GM12878 (cell line): ENCODE measurements at regions of chr3 and their contacts with region 1.

Region 1: DNA sequence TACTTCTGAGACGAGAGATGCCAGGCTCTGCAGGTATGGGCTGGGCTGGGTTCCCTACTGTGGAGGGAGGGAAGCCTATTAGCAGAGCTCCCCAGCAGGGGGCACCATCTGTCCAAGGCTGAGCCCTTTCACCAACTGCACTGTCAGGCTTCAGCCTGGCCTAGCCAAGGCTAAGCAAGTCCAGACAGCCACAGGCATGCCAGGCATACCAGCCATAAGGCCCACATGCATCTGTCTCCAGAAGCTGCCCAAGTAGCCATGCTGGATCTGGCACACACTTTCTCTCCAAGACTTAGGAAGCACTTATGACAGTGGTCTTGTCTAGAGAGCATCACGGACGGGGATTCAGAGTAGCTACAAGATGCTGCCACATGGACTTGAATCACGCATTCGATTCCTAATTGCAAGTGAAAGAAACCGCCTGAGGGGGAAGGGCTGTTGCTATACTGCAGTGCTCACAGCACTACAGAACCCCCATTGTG is 28.3 kb downstream of the RUVBL1 start:
- DNase-seq: no peak
- ATAC-seq: peak; percentile 100
- H3K4me3 ChIP-seq: no peak overlapping the region
- H3K27ac ChIP-seq: no peak overlapping the region; the same call in none of the 2 replicates
- H3K4me1 ChIP-seq: no peaks in the 10 kb centered on the region
- H3K27me3 ChIP-seq: no peaks in the 10 kb centered on the region
- CTCF ChIP-seq: peak; percentile 83 to 93 (median 89)
- EP300 ChIP-seq: no peak
- POLR2A ChIP-seq: no peak
- RAD21 ChIP-seq: peak; percentile 77

Region 2: DNA sequence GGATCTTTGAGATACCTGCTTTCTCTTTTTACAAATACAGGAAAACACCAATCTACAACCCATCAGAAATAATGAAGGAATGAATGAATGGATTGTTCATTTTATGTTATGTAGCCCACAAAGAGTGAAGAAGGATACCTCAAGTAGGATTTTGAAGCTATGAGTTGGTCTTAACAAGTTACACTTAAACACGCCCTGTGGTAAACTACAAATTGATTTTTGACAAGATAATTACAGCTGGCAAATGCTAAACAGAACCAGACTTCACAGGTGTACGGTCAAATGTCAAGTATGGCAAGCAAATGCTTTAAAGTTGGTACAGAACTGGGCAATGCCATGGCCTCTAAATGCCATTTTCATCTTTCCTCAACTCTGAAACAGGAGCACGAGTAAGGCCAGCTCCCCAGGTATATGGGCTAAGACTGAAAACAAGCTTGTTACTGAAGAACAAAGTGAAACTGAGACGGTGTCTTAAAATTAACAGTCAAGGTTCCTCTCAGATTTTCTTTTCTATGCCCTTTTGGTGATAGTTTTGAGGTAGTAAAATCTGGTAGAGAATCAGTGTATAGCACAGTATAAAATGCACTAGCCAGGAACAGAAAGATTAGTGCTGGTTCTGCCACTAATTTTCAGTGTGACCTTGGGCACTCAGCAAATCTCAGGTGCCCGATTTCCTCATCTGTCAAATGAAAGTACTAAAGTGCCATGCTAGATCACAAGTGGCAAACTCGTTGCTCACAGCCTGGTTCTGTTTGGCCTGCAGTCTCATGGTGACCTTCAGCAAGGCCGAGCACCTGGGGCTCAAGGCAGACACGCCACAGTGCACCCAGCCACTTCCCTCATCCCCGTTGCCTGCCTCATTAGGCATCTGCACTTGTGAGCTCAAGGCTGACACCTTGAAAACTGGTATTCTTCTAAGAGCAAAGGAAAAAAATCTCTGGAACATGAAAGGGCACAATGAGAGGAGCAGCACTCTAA is 18.8 kb after region 1 on chr3:
- CTCF ChIA-PET with region 1: interaction called, 13 read pairs
- POLR2A ChIA-PET with region 1: no interaction called
- RAD21 ChIA-PET with region 1: interaction called, 3 read pairs
- SMC1A ChIA-PET with region 1: interaction called, 9 read pairs
- in situ Hi-C with region 1: no loop called
- intact Hi-C with region 1: no loop called
- DNase-seq: peak; percentile 19
- ATAC-seq: peak; percentile 95
- H3K4me3 ChIP-seq: peak overlapping the region; percentile 54
- H3K27ac ChIP-seq: peak overlapping the region; percentile 73
- H3K4me1 ChIP-seq: peaks cover 17% of the 10 kb centered on the region
- H3K27me3 ChIP-seq: no peaks in the 10 kb centered on the region
- CTCF ChIP-seq: no peak
- EP300 ChIP-seq: no peak
- POLR2A ChIP-seq: peak; percentile 57
- RAD21 ChIP-seq: no peak

Region 3: DNA sequence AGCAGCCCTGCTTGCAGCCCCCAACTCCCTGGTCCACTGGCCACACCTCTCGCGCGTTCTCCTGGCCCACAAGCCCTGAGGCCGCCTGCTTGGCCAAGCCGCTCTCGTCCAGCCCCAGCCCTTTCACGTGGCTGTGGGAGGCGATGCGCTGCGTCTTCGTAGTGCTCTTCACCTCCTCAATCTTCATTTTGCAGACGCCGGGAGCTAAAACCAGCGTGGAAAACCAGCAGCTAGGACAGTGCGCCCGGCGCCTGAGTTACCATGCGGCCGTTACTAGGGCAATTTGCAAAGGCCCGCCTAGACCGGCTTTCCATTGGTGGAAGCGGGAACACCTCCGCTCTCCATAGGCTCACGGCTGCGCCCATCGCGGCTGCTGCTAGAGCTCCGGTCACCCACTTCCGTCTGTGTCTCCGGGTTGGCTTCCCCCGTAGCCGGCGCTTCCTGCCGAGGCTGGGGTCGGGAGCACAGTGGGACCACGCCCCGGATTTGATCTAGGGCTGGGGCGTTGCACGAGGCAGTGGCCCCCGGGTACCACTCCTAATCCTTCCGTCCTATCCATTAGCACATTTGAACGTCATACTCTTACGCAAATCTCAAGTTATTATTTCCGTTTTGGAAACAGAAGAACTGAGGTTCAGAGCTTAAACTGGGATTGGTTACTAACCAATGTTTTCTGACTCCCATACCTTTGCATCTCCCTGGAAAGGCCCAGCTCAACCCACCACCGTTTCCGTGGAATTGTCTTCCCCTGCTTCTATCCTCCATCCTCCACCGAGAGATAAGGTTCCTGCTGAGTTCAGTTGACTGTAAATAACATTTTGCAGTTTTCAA is 28.5 kb after region 1 on chr3 and contains the start of gene RUVBL1:
- CTCF ChIA-PET with region 1: interaction called, 13 read pairs
- POLR2A ChIA-PET with region 1: no interaction called
- RAD21 ChIA-PET with region 1: interaction called, 10 read pairs
- SMC1A ChIA-PET with region 1: interaction called, 4 read pairs
- in situ Hi-C with region 1: no loop called
- intact Hi-C with region 1: no loop called
- DNase-seq: peak; percentile 91
- ATAC-seq: peak; percentile 100
- H3K4me3 ChIP-seq: peak within 1 kb of the TSS; percentile 91
- H3K27ac ChIP-seq: peak within 1 kb of the TSS; percentile 24
- H3K4me1 ChIP-seq: peaks cover 6% of the 10 kb centered on the region
- H3K27me3 ChIP-seq: no peaks in the 10 kb centered on the region
- CTCF ChIP-seq: no peak
- EP300 ChIP-seq: peak in 1 of 2 experiments; percentile 40; a peak in 1 of 4 replicates
- POLR2A ChIP-seq: peak; percentile 66
- RAD21 ChIP-seq: no peak
- polyA plus RNA-seq, gene RUVBL1: 15.2 to 32.5 TPM

Region 4: DNA sequence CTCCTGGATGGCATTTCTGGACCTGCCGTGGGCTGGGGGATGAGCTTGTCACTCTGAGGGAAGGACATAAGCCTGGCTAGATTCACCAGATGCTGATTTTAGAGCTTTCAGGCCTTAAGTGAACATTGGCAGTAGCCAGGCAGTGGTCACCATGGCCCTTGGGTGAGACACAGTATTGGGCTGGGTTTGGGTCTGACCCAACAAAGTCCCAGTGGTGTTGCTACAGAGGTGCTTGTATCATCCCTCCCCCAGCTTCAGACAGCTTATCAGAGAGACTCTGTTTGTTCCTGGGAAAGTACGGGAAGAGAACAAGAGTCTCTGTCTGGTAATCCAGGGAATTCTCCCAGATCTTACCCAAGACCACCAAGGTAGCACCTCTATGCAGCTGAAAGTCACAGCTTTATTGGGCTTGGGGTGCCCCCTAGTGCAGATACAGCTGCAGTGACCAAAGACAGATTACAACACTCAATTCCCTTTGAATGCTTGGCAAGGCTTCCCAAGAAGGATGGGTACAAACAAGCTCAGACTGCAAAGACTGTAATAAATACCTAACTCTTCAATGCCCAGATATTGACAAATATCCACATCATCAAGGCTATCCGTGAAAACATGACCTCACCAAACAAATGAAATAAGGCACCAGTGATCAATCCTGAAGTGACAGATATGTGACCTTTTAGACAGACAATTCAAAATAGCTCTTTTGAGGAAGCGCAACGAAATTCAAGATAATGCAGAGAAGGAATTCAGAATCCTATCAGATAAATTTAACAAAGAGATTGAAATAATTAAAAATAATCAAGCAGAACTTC is 38.2 kb after region 1 on chr3:
- CTCF ChIA-PET with region 1: interaction called, 115 read pairs
- POLR2A ChIA-PET with region 1: no interaction called
- RAD21 ChIA-PET with region 1: interaction called, 36 read pairs
- SMC1A ChIA-PET with region 1: interaction called, 53 read pairs
- in situ Hi-C with region 1: no loop called
- intact Hi-C with region 1: loop called (anchors 1 kb)
- DNase-seq: no peak
- ATAC-seq: peak; percentile 88
- H3K4me3 ChIP-seq: no peak overlapping the region
- H3K27ac ChIP-seq: no peak overlapping the region
- H3K4me1 ChIP-seq: no peaks in the 10 kb centered on the region
- H3K27me3 ChIP-seq: no peaks in the 10 kb centered on the region
- CTCF ChIP-seq: peak; percentile 63 to 77 (median 66)
- EP300 ChIP-seq: no peak
- POLR2A ChIP-seq: no peak
- RAD21 ChIP-seq: peak; percentile 78

Region 5: DNA sequence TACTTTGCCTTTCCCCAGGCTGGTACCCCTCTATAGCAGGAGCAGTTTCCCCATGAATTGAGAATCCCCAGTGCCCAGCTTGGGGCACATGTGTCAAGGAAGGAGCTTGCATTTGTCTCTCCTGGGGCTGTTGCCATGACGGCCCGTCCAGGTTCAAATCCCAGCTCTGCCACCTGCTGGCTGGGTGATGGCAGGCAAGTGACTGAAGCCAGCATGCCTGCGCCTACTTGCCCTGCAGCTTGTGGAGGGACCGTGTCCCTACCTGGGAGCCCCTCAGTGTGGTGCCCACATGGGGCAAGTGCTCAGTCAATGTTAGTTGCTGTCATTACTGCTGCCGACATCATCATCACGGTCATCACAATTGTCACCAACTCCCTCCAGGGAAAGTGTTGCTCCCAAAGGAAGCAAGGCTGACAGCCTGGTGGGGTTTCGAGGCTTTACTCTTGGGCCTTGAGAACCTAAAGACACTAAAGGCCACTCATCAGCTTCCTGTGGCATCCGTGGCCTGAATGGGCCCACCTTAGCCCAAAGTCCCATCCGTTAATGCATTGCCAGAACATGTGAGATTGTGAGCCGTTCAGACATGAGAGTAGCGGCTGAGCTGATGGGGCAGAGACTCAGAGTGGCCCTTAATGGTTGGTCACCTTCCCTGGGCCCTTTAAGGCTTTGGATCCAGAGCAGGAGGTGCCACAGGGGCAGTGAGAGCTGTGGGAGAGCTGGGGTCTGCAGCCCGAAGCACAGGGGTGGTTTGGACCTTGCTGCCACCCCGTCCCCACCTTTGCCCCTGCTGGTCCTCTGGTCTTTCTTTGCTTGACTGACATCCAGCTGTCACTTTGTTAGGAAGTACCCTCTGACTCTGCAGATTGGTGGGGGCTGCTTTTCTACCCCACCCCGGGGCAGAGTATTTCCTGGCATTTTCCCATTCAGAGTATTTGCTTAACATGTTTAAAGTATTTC is 227.1 kb after region 1 on chr3:
- CTCF ChIA-PET with region 1: interaction called, 14 read pairs
- POLR2A ChIA-PET with region 1: no interaction called
- RAD21 ChIA-PET with region 1: interaction called, 9 read pairs
- SMC1A ChIA-PET with region 1: interaction called, 5 read pairs
- in situ Hi-C with region 1: no loop called
- intact Hi-C with region 1: loop called (anchors 1 kb)
- DNase-seq: no peak
- ATAC-seq: peak; percentile 77
- H3K4me3 ChIP-seq: no peak overlapping the region
- H3K27ac ChIP-seq: no peak overlapping the region
- H3K4me1 ChIP-seq: no peaks in the 10 kb centered on the region
- H3K27me3 ChIP-seq: no peaks in the 10 kb centered on the region
- CTCF ChIP-seq: peak; percentile 34 to 55 (median 48); a peak in 4 of 6 replicates
- EP300 ChIP-seq: no peak
- POLR2A ChIP-seq: no peak
- RAD21 ChIP-seq: peak; percentile 36

Region 6: GRCh38 chr3:128426128-128426921 is 331.1 kb after region 1 on chr3:
- CTCF ChIA-PET with region 1: no interaction called
- POLR2A ChIA-PET with region 1: no interaction called
- RAD21 ChIA-PET with region 1: no interaction called
- SMC1A ChIA-PET with region 1: interaction called, 4 read pairs
- in situ Hi-C with region 1: no loop called
- intact Hi-C with region 1: loop called (anchors 5 kb)
- DNase-seq: no peak
- ATAC-seq: peak; percentile 98
- H3K4me3 ChIP-seq: no peak overlapping the region
- H3K27ac ChIP-seq: no peak overlapping the region
- H3K4me1 ChIP-seq: no peaks in the 10 kb centered on the region
- H3K27me3 ChIP-seq: no peaks in the 10 kb centered on the region; a peak in 1 of 4 replicates
- CTCF ChIP-seq: peak; percentile 74 to 88 (median 83)
- EP300 ChIP-seq: no peak
- POLR2A ChIP-seq: no peak
- RAD21 ChIP-seq: peak; percentile 93

Region 7: DNA sequence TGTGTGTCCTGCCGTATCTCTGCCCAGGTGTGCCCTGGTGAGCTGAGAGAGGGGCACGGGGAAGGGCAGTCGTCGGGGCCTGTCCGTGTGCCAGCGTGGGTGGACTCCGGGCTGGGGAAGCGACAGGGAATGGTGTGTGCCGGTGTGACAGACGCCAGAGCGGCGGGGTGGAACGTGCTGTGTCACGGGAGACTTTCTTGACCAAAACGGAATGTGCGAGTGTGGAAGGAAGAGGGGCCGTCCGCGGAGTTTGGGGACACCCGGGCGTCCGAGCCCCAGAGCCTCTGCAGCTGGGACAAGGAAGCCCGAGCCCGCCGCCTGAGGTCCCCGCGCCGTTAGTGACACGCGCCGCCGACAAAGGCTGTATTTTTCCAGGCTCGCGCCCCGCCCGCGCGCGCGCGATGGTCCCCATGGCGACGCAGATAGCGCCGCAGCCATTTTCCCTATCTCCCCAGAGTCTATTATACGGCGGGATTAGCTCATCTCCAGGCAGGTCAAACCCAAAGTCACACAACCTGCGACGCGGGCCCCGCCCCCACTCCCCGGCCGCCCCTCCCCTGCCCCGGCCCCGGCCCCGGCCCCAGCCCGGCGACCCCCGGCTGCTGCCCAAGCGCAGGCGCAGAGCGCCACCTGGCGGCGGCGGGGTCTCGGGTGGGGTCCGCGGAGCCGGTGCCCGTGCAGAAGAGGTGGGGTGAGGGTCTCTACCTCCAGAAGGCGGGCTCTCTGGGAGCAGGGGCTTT is 402.3 kb after region 1 on chr3:
- CTCF ChIA-PET with region 1: no interaction called
- POLR2A ChIA-PET with region 1: no interaction called
- RAD21 ChIA-PET with region 1: interaction called, 3 read pairs
- SMC1A ChIA-PET with region 1: no interaction called
- in situ Hi-C with region 1: loop called (anchors 10 kb)
- intact Hi-C with region 1: loop called (anchors 5 kb)
- DNase-seq: no peak
- ATAC-seq: peak; percentile 72
- H3K4me3 ChIP-seq: 0 out of 2 replicates have a peak overlapping the region, but pooled peaks have one; percentile 11
- H3K27ac ChIP-seq: no peak overlapping the region
- H3K4me1 ChIP-seq: no peaks in the 10 kb centered on the region
- H3K27me3 ChIP-seq: peaks cover 9% of the 10 kb centered on the region in 2 experiments
- CTCF ChIP-seq: peak; percentile 46 to 73 (median 51)
- EP300 ChIP-seq: no peak
- POLR2A ChIP-seq: no peak
- RAD21 ChIP-seq: peak; percentile 61